Mammary epithelial cell (primary cell): ENCODE measurements at regions of chr19 and their contacts with region 1.

Region 1: GRCh38 chr19:1767464-1767933 is 14.2 kb downstream of the ONECUT3 start:
- DNase-seq: no peak
- H3K4me3 ChIP-seq: no peak overlapping the region
- H3K27ac ChIP-seq: no peak overlapping the region
- H3K4me1 ChIP-seq: peaks cover 10% of the 10 kb centered on the region
- H3K27me3 ChIP-seq: peaks cover 24% of the 10 kb centered on the region
- CTCF ChIP-seq: peak; percentile 79 to 91

Region 2: GRCh38 chr19:1540365-1540925 is 227.1 kb before region 1 on chr19:
- CTCF ChIA-PET with region 1: no interaction called
- dilution Hi-C with region 1: no loop called
- in situ Hi-C with region 1: no loop called
- intact Hi-C with region 1: loop called (anchors 10 kb)
- DNase-seq: no peak
- H3K4me3 ChIP-seq: no peak overlapping the region
- H3K27ac ChIP-seq: no peak overlapping the region
- H3K4me1 ChIP-seq: no peaks in the 10 kb centered on the region
- H3K27me3 ChIP-seq: no peaks in the 10 kb centered on the region
- CTCF ChIP-seq: no peak

Region 3: DNA sequence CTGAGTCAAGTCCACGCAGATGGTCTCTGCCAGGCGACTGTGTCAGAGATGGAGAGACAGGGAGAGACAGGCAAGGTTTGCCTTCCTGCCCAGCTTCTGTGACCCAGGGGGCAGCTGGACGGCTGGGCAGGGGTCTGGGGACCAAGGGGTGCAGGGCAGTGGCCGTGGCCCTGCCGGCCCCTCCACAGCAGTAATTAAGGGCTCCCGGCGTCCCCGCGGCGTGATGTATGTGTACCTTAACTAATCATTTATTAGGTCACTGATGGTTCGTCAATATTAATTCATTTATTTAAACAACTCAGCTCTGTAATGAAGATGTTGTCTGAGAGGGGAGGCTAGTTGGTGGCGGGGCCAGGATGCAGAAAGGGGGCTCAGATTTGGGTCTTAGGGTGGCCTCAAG is 86.5 kb before region 1 on chr19:
- CTCF ChIA-PET with region 1: no interaction called
- dilution Hi-C with region 1: no loop called
- in situ Hi-C with region 1: loop called (anchors 10 kb)
- intact Hi-C with region 1: no loop called
- DNase-seq: no peak
- H3K4me3 ChIP-seq: no peak overlapping the region
- H3K27ac ChIP-seq: no peak overlapping the region
- H3K4me1 ChIP-seq: peaks cover under 1% of the 10 kb centered on the region
- H3K27me3 ChIP-seq: no peaks in the 10 kb centered on the region
- CTCF ChIP-seq: no peak

Region 4: GRCh38 chr19:1690699-1691307 is 76.7 kb before region 1 on chr19:
- CTCF ChIA-PET with region 1: no interaction called
- dilution Hi-C with region 1: no loop called
- in situ Hi-C with region 1: loop called in 1 of 2 experiments (anchors 10 kb)
- intact Hi-C with region 1: loop called (anchors 1 kb)
- DNase-seq: peak; percentile 28
- H3K4me3 ChIP-seq: peak overlapping the region in 1 of 3 experiments; percentile 5
- H3K27ac ChIP-seq: no peak overlapping the region
- H3K4me1 ChIP-seq: peaks cover 15% of the 10 kb centered on the region
- H3K27me3 ChIP-seq: peaks cover 3% of the 10 kb centered on the region
- CTCF ChIP-seq: no peak

Region 5: DNA sequence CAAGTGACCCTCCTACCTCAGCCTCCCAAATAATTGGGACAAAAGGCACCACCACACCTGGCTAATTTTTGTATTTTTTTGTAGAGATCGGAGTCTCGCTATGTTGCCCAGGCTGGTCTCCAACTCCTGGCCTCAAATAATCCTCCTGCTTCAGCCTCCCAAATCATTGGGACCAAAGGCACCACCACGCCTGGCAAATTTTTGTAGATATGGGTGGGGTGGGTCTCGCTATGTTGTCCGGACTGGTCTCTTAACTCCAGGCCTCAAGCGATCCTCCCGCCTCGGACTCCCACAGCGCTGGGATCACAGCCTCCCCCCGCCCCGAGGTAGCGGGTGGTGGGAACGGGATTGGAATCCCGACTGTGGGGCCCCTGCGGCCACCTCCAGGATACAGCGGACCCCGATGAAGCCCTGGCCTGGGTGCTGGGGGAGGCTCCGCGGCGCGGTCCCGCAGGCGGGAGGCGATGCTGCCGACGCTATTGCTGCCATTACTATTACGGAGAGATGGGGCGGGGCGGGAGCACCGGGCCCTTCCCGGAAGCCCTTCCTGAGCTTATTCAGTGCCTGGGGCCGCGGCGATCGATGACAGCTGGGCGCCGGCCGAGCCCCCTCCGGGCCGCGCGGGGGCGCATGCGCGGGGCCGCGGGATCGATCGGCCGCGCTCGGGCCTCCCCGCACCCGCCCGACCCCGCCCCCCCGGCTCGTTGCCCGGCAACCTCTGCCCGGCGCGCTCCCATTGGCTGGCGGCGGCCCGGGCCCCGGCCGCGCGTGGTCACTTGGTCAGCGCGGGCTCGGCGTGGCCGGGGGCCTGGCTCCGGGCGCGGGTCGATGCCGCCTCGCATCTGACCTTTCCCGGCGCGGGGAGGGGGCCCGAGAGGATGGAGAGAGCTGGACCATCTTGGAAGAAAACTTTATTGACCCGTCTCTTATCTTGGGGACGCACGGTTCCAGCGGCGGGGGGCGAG is 42.1 kb before region 1 on chr19:
- CTCF ChIA-PET with region 1: no interaction called
- dilution Hi-C with region 1: no loop called
- in situ Hi-C with region 1: no loop called
- intact Hi-C with region 1: no loop called
- DNase-seq: peak; percentile 27
- H3K4me3 ChIP-seq: peak overlapping the region; percentile 49 to 63 (median 55)
- H3K27ac ChIP-seq: no peak overlapping the region
- H3K4me1 ChIP-seq: peaks cover 12% of the 10 kb centered on the region
- H3K27me3 ChIP-seq: peaks cover 2% of the 10 kb centered on the region
- CTCF ChIP-seq: peak in 1 of 2 donors; percentile 2

Region 6: GRCh38 chr19:1794424-1795172 is 27.1 kb after region 1 on chr19:
- CTCF ChIA-PET with region 1: no interaction called
- dilution Hi-C with region 1: no loop called
- in situ Hi-C with region 1: no loop called
- intact Hi-C with region 1: loop called (anchors 1 kb)
- DNase-seq: no peak
- H3K4me3 ChIP-seq: no peak overlapping the region
- H3K27ac ChIP-seq: no peak overlapping the region
- H3K4me1 ChIP-seq: peaks cover 5% of the 10 kb centered on the region
- H3K27me3 ChIP-seq: no peaks in the 10 kb centered on the region
- CTCF ChIP-seq: no peak

Region 7: GRCh38 chr19:1825909-1826556 is 58.5 kb after region 1 on chr19:
- CTCF ChIA-PET with region 1: no interaction called
- dilution Hi-C with region 1: no loop called
- in situ Hi-C with region 1: no loop called
- intact Hi-C with region 1: no loop called
- DNase-seq: peak; percentile 41
- H3K4me3 ChIP-seq: no peak overlapping the region
- H3K27ac ChIP-seq: no peak overlapping the region
- H3K4me1 ChIP-seq: peaks cover 4% of the 10 kb centered on the region
- H3K27me3 ChIP-seq: no peaks in the 10 kb centered on the region
- CTCF ChIP-seq: peak; percentile 83 to 95